ENCODE measurements at regions of chr12 and their contacts with region 1.

Region 1: GRCh38 chr12:27305673-27306456 is 26.8 kb upstream of the BMAL2 start:
- DNase-seq: peak; percentile 84
- ATAC-seq: peak; percentile 43
- H3K4me3 ChIP-seq: no peak overlapping the region
- H3K27ac ChIP-seq: no peak overlapping the region
- H3K4me1 ChIP-seq: peaks cover 10% of the 10 kb centered on the region
- H3K27me3 ChIP-seq: no peaks in the 10 kb centered on the region
- CTCF ChIP-seq: peak; percentile 79

Region 2: GRCh38 chr12:26884765-26885576 is 420.9 kb before region 1 on chr12:
- CTCF ChIA-PET with region 1: interaction called, 4 read pairs
- POLR2A ChIA-PET with region 1: no interaction called
- intact Hi-C with region 1: loop called (anchors 10 kb)
- DNase-seq: peak; percentile 99
- ATAC-seq: peak; percentile 96
- H3K4me3 ChIP-seq: peak overlapping the region; percentile 42; the same call in 1 of the 2 replicates
- H3K27ac ChIP-seq: no peak overlapping the region
- H3K4me1 ChIP-seq: peaks cover 3% of the 10 kb centered on the region; the same call in 1 of the 2 replicates
- H3K27me3 ChIP-seq: no peaks in the 10 kb centered on the region
- CTCF ChIP-seq: peak; percentile 99

Region 3: GRCh38 chr12:27034607-27035293 is 271.1 kb before region 1 on chr12:
- CTCF ChIA-PET with region 1: no interaction called
- POLR2A ChIA-PET with region 1: no interaction called
- intact Hi-C with region 1: loop called (anchors 5 kb)
- DNase-seq: no peak
- ATAC-seq: no peak
- H3K4me3 ChIP-seq: no peak overlapping the region
- H3K27ac ChIP-seq: no peak overlapping the region
- H3K4me1 ChIP-seq: no peaks in the 10 kb centered on the region
- H3K27me3 ChIP-seq: no peaks in the 10 kb centered on the region
- CTCF ChIP-seq: no peak

Region 4: DNA sequence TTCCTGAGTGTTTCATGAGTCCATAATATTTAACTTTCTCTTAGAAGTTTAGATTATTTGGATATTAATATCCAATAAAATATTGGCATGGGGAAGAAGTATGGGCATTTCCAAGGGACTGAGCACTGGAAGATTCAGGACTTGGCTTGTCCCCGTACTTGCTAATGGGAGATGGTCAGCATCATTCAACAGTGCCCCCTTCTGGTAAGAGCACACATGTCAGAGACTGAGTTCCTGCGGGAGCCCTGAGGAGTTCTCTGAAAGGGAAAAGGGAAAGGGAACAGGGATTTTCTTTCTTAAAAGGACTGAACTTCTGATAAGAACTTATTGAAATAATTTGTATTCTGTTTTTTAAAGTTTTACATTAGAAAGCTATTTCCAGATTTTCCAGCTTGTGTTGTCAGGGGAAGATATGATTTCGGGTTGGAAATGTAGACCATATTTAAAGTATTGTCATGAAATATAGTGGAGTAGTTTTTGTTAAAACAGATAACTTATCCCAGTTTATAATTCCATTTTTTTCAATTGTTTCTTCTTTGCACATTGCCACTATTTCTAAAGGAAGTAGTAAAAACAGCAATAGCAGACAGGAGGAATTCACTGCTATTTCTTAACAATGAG is 163.7 kb before region 1 on chr12:
- CTCF ChIA-PET with region 1: no interaction called
- POLR2A ChIA-PET with region 1: no interaction called
- intact Hi-C with region 1: loop called (anchors 1 kb)
- DNase-seq: peak; percentile 96
- ATAC-seq: peak; percentile 98
- H3K4me3 ChIP-seq: no peak overlapping the region
- H3K27ac ChIP-seq: no peak overlapping the region
- H3K4me1 ChIP-seq: no peaks in the 10 kb centered on the region
- H3K27me3 ChIP-seq: no peaks in the 10 kb centered on the region
- CTCF ChIP-seq: peak; percentile 99

Region 5: DNA sequence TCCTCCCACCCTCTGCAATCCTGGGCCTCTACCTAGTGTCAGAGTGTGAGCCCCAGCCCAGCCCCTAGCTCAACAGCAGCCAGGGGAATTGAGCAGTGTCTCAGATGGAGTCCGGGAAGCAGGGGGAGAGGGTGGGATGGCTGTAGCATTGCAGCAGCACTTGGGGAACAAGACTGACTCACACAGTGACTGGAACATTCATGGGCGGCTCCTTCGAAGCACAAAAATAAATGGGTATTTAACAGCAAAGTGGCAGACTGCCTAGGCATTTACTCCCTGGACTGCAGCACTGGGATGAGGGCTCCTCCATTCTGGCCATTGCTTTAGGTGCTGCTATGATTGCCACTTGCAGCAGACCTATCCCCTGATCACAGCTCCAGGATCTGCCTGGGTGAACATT is 107.8 kb before region 1 on chr12:
- CTCF ChIA-PET with region 1: no interaction called
- POLR2A ChIA-PET with region 1: no interaction called
- intact Hi-C with region 1: no loop called
- DNase-seq: no peak
- ATAC-seq: no peak
- H3K4me3 ChIP-seq: no peak overlapping the region
- H3K27ac ChIP-seq: no peak overlapping the region
- H3K4me1 ChIP-seq: peaks cover 7% of the 10 kb centered on the region
- H3K27me3 ChIP-seq: no peaks in the 10 kb centered on the region
- CTCF ChIP-seq: no peak

Region 6: DNA sequence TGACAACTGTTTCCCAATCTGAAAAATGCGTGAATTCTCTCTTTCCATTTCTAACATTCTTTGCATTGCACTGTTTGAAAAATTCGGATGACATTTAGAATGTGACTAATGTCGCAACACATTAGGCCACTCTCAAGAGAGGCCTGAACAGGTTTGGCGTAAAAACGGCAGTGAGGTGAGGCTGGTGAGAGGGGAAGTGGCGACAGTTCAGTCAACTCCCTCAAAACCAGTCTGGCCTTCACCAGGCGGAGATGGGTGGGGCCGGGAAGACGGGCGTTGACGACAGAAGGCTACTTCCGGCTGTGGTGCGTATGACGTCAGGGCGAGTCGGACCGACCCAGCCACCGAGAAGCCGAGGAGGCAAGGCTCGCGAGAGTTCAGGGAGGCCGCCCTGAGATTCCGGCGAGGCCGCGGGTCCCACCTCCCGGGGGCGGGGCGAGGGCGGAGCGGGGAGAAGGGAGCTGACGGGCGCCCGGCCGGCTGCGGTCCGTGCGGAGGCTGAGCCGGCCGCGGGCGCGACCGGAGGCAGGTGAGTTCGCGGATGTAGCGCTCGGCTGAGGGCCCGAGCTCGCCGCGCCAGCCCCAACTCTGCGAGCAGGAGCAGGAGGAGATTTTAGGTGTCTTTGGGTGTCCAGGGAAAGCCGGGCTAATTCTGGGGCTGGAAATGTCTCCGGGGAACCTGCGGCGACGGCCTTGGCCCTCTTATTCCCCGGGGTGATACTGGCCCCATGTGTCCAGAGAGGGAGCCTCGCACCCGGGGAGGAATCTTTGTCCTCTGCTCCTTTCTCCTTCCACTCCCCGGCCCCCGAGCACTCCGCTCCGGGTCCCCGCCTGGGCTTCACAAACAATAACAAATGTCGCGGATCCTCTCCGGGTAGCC is 61.8 kb before region 1 on chr12 and contains the start of gene STK38L:
- CTCF ChIA-PET with region 1: interaction called, 5 read pairs
- POLR2A ChIA-PET with region 1: no interaction called
- intact Hi-C with region 1: loop called (anchors 1 kb)
- DNase-seq: peak; percentile 98
- ATAC-seq: peak; percentile 94
- H3K4me3 ChIP-seq: peak within 1 kb of the TSS; percentile 80
- H3K27ac ChIP-seq: peak within 1 kb of the TSS; percentile 40
- H3K4me1 ChIP-seq: peaks cover 28% of the 10 kb centered on the region
- H3K27me3 ChIP-seq: no peaks in the 10 kb centered on the region
- CTCF ChIP-seq: peak; percentile 51; the same call in 1 of the 2 replicates
- total RNA-seq, gene STK38L: 19.4 and 32.3 TPM in 2 replicates

Region 7: DNA sequence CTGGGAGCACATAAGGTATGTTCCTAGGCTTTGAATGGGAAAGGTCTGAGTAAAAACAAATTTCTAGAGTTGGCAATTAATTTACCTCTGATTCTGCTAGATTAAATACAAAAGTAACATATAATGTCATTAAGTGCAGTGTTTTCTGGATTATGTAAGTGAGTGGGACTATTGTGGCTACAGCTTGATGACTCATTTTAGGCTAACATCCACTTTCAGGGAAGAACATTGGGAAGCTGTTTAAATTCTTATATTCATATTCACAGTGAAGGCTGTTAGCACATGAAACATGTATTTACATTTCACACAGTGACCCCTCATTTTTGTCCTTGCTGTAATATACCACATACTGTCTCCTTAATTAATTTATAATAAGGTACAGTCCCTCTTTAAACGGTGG is 13.5 kb after region 1 on chr12:
- CTCF ChIA-PET with region 1: interaction called, 6 read pairs
- POLR2A ChIA-PET with region 1: interaction called, 19 read pairs
- intact Hi-C with region 1: no loop called
- DNase-seq: peak; percentile 81
- ATAC-seq: peak; percentile 58
- H3K4me3 ChIP-seq: no peak overlapping the region
- H3K27ac ChIP-seq: peak overlapping the region; percentile 70
- H3K4me1 ChIP-seq: peaks cover 52% of the 10 kb centered on the region
- H3K27me3 ChIP-seq: no peaks in the 10 kb centered on the region
- CTCF ChIP-seq: no peak

Measured in PC-3 (cell line).